ENCODE measurements at regions of chr3 and their contacts with region 1.

Region 1: GRCh38 chr3:95356764-95357501 is 1294.1 kb downstream of the NSUN3 start:
- DNase-seq: peak; percentile 48
- ATAC-seq: peak; percentile 88
- H3K4me3 ChIP-seq: no peak overlapping the region
- H3K27ac ChIP-seq: peak overlapping the region; percentile 38; the same call in 1 of the 2 replicates
- H3K4me1 ChIP-seq: no peaks in the 10 kb centered on the region
- H3K27me3 ChIP-seq: no peaks in the 10 kb centered on the region
- CTCF ChIP-seq: no peak
- EP300 ChIP-seq: peak; percentile 29 to 75; a peak in 2 of 4 replicates
- POLR2A ChIP-seq: no peak
- RAD21 ChIP-seq: no peak

Region 2: GRCh38 chr3:95217661-95218060 is 139.3 kb before region 1 on chr3:
- CTCF ChIA-PET with region 1: no interaction called
- POLR2A ChIA-PET with region 1: no interaction called
- RAD21 ChIA-PET with region 1: no interaction called
- SMC1A ChIA-PET with region 1: no interaction called
- in situ Hi-C with region 1: no loop called
- intact Hi-C with region 1: no loop called
- DNase-seq: no peak
- ATAC-seq: no peak
- H3K4me3 ChIP-seq: no peak overlapping the region
- H3K27ac ChIP-seq: no peak overlapping the region
- H3K4me1 ChIP-seq: no peaks in the 10 kb centered on the region
- H3K27me3 ChIP-seq: no peaks in the 10 kb centered on the region
- CTCF ChIP-seq: no peak
- EP300 ChIP-seq: no peak
- POLR2A ChIP-seq: no peak
- RAD21 ChIP-seq: no peak

Region 3: DNA sequence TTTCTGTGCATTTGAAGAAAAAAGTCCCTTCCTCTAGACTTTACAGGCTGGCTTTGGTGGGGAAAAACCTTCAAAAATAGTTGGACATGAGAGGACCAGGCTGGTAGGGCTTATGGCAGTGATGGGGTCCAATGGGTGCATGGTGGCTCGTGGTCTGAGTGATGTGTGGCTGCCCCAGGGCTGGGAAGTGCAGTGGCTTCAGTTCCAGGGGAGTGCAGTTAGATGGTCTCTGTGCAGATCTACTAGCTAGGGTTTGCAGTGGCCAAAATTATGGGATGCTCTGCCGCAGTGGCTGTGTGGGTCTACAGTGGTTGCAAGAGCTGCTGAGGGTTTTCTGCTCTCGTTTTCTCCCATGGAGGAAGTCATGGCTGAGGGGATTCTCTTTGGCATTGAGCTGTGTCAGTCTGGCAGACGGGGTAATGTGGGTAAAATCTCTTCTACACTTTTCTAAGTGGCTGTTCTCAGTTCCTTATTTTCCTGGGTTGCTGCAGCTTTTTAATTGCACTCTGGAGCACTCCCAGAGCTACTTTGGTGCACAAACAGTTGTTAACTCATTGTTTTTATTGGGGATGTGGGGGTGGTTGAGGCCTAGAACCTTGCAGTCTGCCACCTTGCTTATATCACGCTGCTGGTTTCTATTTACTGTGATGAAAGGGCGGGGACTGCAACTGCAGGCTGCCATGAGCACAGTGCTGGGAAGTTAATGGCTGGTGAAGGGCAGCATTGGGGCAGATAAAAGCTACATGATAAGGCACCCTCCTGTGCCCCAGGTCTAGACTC is 30.5 kb after region 1 on chr3:
- CTCF ChIA-PET with region 1: interaction called, 4 read pairs
- POLR2A ChIA-PET with region 1: no interaction called
- RAD21 ChIA-PET with region 1: interaction called, 22 read pairs
- SMC1A ChIA-PET with region 1: interaction called, 23 read pairs
- in situ Hi-C with region 1: no loop called
- intact Hi-C with region 1: loop called (anchors 1 kb)
- DNase-seq: peak; percentile 80
- ATAC-seq: peak; percentile 97
- H3K4me3 ChIP-seq: no peak overlapping the region
- H3K27ac ChIP-seq: no peak overlapping the region
- H3K4me1 ChIP-seq: peaks cover 5% of the 10 kb centered on the region
- H3K27me3 ChIP-seq: no peaks in the 10 kb centered on the region
- CTCF ChIP-seq: no peak
- EP300 ChIP-seq: peak; percentile 94 to 95; a peak in 3 of 4 replicates
- POLR2A ChIP-seq: no peak
- RAD21 ChIP-seq: no peak